Activated CD4-positive, alpha-beta T cell treated with anti-CD3 and anti-CD28 coated beads, Interleukin-2, amount 10 ng/mL, durations not matched to agents 24 days and 14 days (primary cell): ENCODE measurements at regions of chr3 and their contacts with region 1.

Region 1: GRCh38 chr3:136919799-136920580 is 37.8 kb upstream of the IL20RB start:
- DNase-seq: peak; percentile 81
- H3K4me3 Mint-ChIP-seq: peak overlapping the region; percentile 51
- H3K27ac Mint-ChIP-seq: peak overlapping the region; percentile 53
- H3K4me1 Mint-ChIP-seq: peaks cover 42% of the 10 kb centered on the region
- H3K27me3 Mint-ChIP-seq: no peaks in the 10 kb centered on the region

Region 2: GRCh38 chr3:136899622-136900158 is 20.3 kb before region 1 on chr3:
- intact Hi-C with region 1: loop called (anchors 1 kb)
- DNase-seq: peak; percentile 37
- H3K4me3 Mint-ChIP-seq: no peak overlapping the region
- H3K27ac Mint-ChIP-seq: peak overlapping the region; percentile 10
- H3K4me1 Mint-ChIP-seq: peaks cover 34% of the 10 kb centered on the region
- H3K27me3 Mint-ChIP-seq: no peaks in the 10 kb centered on the region